ENCODE measurements at regions of chr18 and their contacts with region 1.

Region 1: DNA sequence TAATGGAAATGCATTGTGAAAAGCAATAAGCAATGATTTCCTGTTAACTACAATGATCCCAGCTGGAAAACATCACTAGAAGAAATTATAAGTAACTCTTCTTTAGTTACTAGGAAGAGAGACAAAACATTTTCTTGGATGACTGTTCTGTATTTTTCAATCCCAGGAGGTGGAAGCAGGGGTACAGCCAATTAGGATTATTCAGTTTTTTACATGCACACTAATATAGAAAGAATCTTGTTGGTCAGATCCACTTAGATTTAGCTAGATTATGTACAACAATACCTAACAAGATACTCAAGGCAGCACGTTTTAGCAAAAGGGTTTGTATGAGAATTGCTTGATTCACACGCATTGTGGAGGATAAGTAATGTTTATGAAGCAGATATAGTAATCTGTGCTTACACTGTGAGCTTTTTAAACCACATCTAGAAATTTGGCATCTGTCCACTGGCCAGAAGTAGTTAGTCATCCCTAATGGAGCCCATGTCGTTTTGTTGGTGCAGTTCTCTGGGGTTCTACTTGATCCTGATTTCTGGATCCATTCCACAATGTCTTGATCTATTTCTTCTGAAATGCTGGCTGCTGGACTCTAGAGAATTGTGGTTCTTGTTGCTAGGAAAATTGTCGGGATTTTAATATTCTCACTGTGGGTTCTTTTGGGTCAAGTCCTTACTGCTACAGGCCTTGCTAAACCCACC is 199.7 kb downstream of the ADCYAP1 start:
- DNase-seq: no peak
- ATAC-seq: no peak
- H3K4me3 ChIP-seq: no peak overlapping the region
- H3K27ac ChIP-seq: no peak overlapping the region
- H3K4me1 ChIP-seq: no peaks in the 10 kb centered on the region
- H3K27me3 ChIP-seq: no peaks in the 10 kb centered on the region
- CTCF ChIP-seq: no peak

Region 2: GRCh38 chr18:845152-845819 is 259.0 kb before region 1 on chr18:
- CTCF ChIA-PET with region 1: no interaction called
- POLR2A ChIA-PET with region 1: no interaction called
- in situ Hi-C with region 1: no loop called
- intact Hi-C with region 1: no loop called
- DNase-seq: no peak
- ATAC-seq: peak; percentile 59
- H3K4me3 ChIP-seq: no peak overlapping the region
- H3K27ac ChIP-seq: no peak overlapping the region
- H3K4me1 ChIP-seq: peaks cover 11% of the 10 kb centered on the region
- H3K27me3 ChIP-seq: no peaks in the 10 kb centered on the region
- CTCF ChIP-seq: no peak

Region 3: GRCh38 chr18:1048032-1048431 is 56.3 kb before region 1 on chr18:
- CTCF ChIA-PET with region 1: no interaction called
- POLR2A ChIA-PET with region 1: no interaction called
- in situ Hi-C with region 1: no loop called
- intact Hi-C with region 1: loop called (anchors 5 kb)
- DNase-seq: no peak
- ATAC-seq: no peak
- H3K4me3 ChIP-seq: no peak overlapping the region
- H3K27ac ChIP-seq: no peak overlapping the region
- H3K4me1 ChIP-seq: no peaks in the 10 kb centered on the region
- H3K27me3 ChIP-seq: no peaks in the 10 kb centered on the region
- CTCF ChIP-seq: no peak

Region 4: GRCh38 chr18:1227025-1227424 is 122.7 kb after region 1 on chr18:
- CTCF ChIA-PET with region 1: no interaction called
- POLR2A ChIA-PET with region 1: no interaction called
- in situ Hi-C with region 1: no loop called
- intact Hi-C with region 1: no loop called
- DNase-seq: no peak
- ATAC-seq: no peak
- H3K4me3 ChIP-seq: no peak overlapping the region
- H3K27ac ChIP-seq: no peak overlapping the region
- H3K4me1 ChIP-seq: no peaks in the 10 kb centered on the region
- H3K27me3 ChIP-seq: no peaks in the 10 kb centered on the region
- CTCF ChIP-seq: no peak

Measured in Panc1 (cell line).